ENCODE measurements at regions of chr11 and their contacts with region 1.

Region 1: GRCh38 chr11:73931039-73931645 is 19.7 kb upstream of the DNAJB13 start:
- DNase-seq: peak; percentile 79
- ATAC-seq: peak; percentile 100
- H3K4me3 ChIP-seq: no peak overlapping the region
- H3K27ac ChIP-seq: no peak overlapping the region
- H3K4me1 ChIP-seq: peaks cover 3% of the 10 kb centered on the region in 2 experiments; a peak in 3 of 4 replicates
- H3K27me3 ChIP-seq: no peaks in the 10 kb centered on the region
- CTCF ChIP-seq: peak; percentile 49 to 74 (median 60); a peak in 5 of 6 replicates
- POLR2A ChIP-seq: no peak
- RAD21 ChIP-seq: peak; percentile 93

Region 2: DNA sequence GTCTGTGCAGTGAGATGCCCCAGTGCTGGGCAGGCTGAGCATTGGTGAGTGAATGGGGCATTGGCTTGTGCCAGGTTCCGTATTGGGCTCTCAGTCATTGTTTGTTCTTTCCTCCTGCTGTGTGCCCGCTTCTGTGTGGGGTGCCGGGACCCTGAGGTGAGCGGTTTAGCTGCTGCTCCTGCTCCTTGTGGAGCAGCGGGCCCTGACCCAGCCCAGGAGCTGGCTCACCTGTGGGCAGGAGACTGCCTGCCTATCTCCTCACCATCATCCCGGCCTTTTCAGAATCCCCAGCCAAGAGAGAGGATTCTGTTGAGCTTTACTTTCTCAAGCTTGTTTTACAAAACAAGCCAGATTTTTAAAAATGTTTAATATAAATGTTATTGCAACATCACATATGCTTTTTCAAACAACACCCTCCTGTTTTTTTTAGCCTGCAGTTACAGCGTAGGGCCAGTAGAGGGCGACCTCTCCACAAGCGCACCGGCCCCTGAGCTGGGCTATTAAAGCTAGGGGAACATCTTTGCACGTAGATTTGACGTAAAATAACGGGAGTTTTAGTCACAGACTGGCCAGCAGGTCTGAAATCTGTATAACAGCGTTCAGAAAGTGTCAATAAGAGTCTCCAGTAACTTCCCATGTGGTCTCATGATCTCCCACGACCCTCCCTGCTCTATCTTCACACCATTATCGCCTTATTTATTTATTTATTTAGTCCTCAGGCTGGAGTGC is 580.1 kb before region 1 on chr11:
- CTCF ChIA-PET with region 1: interaction called, 12 read pairs
- POLR2A ChIA-PET with region 1: no interaction called
- RAD21 ChIA-PET with region 1: no interaction called
- intact Hi-C with region 1: no loop called
- DNase-seq: peak; percentile 41
- ATAC-seq: peak; percentile 85
- H3K4me3 ChIP-seq: no peak overlapping the region
- H3K27ac ChIP-seq: no peak overlapping the region
- H3K4me1 ChIP-seq: no peaks in the 10 kb centered on the region
- H3K27me3 ChIP-seq: no peaks in the 10 kb centered on the region
- CTCF ChIP-seq: peak; percentile 88 to 97 (median 97); a peak in 5 of 6 replicates
- POLR2A ChIP-seq: no peak
- RAD21 ChIP-seq: peak; percentile 84

Region 3: DNA sequence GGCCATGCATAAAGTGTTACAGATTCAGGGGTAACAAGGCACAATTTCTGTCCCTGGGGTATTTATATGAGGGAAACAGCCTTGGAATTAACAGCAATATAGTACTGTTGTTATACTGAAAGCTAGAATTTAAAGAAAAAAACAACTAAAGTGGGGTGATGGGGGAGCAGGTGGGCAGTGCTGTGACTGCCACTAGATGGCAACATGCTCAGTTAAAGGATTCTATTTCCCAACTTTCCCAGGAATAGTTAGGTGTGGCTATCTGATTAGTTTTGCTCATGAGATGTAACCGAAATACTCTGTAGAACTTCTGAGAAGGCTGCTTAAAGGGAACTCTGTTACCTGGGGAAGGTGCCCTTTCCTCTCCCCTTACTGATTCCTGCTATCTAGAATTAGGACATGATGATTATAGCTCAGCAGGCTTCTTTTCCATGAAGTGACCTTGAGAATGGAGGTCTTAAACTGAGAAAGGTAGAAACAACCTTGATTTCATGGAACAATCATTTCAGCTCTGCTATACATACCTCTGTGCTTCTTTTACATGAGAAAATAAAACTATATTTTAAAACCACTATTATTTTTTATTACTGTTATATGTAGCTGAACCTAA is 452.3 kb before region 1 on chr11:
- CTCF ChIA-PET with region 1: interaction called, 16 read pairs
- POLR2A ChIA-PET with region 1: no interaction called
- RAD21 ChIA-PET with region 1: no interaction called
- intact Hi-C with region 1: loop called (anchors 5 kb)
- DNase-seq: peak; percentile 26
- ATAC-seq: peak; percentile 95
- H3K4me3 ChIP-seq: no peak overlapping the region
- H3K27ac ChIP-seq: no peak overlapping the region
- H3K4me1 ChIP-seq: peaks cover 6 to 9% of the 10 kb centered on the region in 2 experiments
- H3K27me3 ChIP-seq: no peaks in the 10 kb centered on the region
- CTCF ChIP-seq: peak; percentile 54 to 94 (median 90); a peak in 5 of 6 replicates
- POLR2A ChIP-seq: no peak
- RAD21 ChIP-seq: peak; percentile 69

Region 4: GRCh38 chr11:73661035-73661628 is 270.0 kb before region 1 on chr11:
- CTCF ChIA-PET with region 1: interaction called, 17 read pairs
- POLR2A ChIA-PET with region 1: no interaction called
- RAD21 ChIA-PET with region 1: no interaction called
- intact Hi-C with region 1: no loop called
- DNase-seq: peak; percentile 43
- ATAC-seq: peak; percentile 96
- H3K4me3 ChIP-seq: no peak overlapping the region
- H3K27ac ChIP-seq: peak overlapping the region; percentile 12; the same call in 1 of the 2 replicates
- H3K4me1 ChIP-seq: peaks cover 5 to 20% of the 10 kb centered on the region in 2 experiments
- H3K27me3 ChIP-seq: no peaks in the 10 kb centered on the region
- CTCF ChIP-seq: peak; percentile 92 to 95 (median 92)
- POLR2A ChIP-seq: no peak
- RAD21 ChIP-seq: peak; percentile 99

Region 5: GRCh38 chr11:73787643-73788537 is 143.3 kb before region 1 on chr11 and contains the start of gene MRPL48:
- CTCF ChIA-PET with region 1: interaction called, 5 read pairs
- POLR2A ChIA-PET with region 1: interaction called, 3 read pairs
- RAD21 ChIA-PET with region 1: no interaction called
- intact Hi-C with region 1: loop called (anchors 5 kb)
- DNase-seq: peak; percentile 91
- ATAC-seq: peak; percentile 96
- H3K4me3 ChIP-seq: peak within 1 kb of the TSS; percentile 79 to 88
- H3K27ac ChIP-seq: peak within 1 kb of the TSS; percentile 88
- H3K4me1 ChIP-seq: peaks cover 17 to 22% of the 10 kb centered on the region in 2 experiments
- H3K27me3 ChIP-seq: no peaks in the 10 kb centered on the region
- CTCF ChIP-seq: no peak
- POLR2A ChIP-seq: peak; percentile 75
- RAD21 ChIP-seq: no peak
- total RNA-seq, gene MRPL48: 66.8 TPM

Region 6: GRCh38 chr11:75757651-75758050 is 1826.5 kb after region 1 on chr11:
- CTCF ChIA-PET with region 1: no interaction called
- POLR2A ChIA-PET with region 1: no interaction called
- RAD21 ChIA-PET with region 1: no interaction called
- intact Hi-C with region 1: no loop called
- DNase-seq: no peak
- ATAC-seq: no peak
- H3K4me3 ChIP-seq: no peak overlapping the region
- H3K27ac ChIP-seq: no peak overlapping the region
- H3K4me1 ChIP-seq: no peaks in the 10 kb centered on the region
- H3K27me3 ChIP-seq: no peaks in the 10 kb centered on the region
- CTCF ChIP-seq: no peak
- POLR2A ChIP-seq: no peak
- RAD21 ChIP-seq: no peak

Measured in HCT116 (cell line).